CD4-positive, alpha-beta T cell (primary cell): ENCODE measurements at regions of chr13 and their contacts with region 1.

Region 1: DNA sequence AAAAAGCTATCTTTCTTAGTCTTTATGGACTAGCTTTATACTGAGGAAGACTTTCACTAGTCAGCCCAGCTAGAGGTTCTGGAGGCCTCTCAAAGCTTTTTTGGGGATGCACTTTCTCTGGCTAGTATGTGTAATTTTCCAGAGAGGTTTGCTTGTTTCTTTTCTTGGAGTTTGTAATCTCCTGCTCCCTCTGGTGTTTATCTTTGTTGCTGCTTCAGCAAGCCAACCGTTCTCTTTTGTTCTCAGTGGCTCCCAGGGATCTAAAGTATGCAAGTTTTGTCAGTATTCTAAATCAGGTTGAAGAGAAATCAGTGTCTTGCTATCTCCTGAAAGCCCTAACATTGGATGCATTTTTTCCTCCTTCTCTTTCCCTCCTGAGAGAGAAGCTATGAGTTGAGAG is 121.1 kb upstream of the MYO16 start:
- DNase-seq: peak in 3 of 14 experiments; percentile 49 to 63 (median 52)
- ATAC-seq: no peak
- H3K4me3 ChIP-seq: no peak overlapping the region
- H3K4me3 Mint-ChIP-seq: no peak overlapping the region
- H3K27ac ChIP-seq: no peak overlapping the region
- H3K27ac Mint-ChIP-seq: no peak overlapping the region
- H3K4me1 ChIP-seq: no peaks in the 10 kb centered on the region
- H3K4me1 Mint-ChIP-seq: no peaks in the 10 kb centered on the region
- H3K27me3 ChIP-seq: no peaks in the 10 kb centered on the region
- H3K27me3 Mint-ChIP-seq: no peaks in the 10 kb centered on the region
- CTCF ChIP-seq: peak; percentile 48

Region 2: DNA sequence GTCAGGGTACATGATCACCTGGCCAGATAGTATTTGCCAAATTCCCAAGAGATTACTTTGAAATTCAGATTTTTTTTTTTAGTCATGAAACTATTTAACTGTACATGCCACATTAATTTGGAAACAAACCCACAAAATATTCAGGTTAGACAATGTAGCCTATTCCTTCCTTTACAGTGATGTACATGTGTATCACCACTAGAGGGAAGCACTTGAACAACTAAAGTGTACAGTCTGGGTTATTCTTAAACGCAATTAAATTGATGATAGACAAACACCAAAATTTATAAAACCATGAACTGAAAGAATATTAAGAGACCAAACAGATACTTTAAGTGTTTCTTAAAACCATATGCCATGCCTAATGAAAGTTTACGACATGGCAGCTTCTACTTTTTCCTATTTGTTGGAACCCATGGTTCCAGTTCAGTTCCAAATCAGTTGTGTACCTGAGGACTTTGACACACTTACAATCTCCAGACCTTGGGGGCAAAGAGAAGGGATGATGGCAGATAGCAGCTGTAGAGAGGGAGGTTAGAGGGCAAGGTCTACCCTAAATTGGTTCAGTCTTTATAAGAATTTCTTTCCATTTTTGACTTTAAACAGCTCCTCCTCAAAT is 185.9 kb before region 1 on chr13:
- CTCF ChIA-PET with region 1: interaction called, 3 read pairs
- POLR2A ChIA-PET with region 1: no interaction called
- intact Hi-C with region 1: loop called (anchors 5 kb)
- DNase-seq: peak in 3 of 14 experiments; percentile 65 to 68 (median 67)
- ATAC-seq: peak; percentile 77
- H3K4me3 ChIP-seq: no peak overlapping the region
- H3K4me3 Mint-ChIP-seq: no peak overlapping the region
- H3K27ac ChIP-seq: no peak overlapping the region
- H3K27ac Mint-ChIP-seq: no peak overlapping the region
- H3K4me1 ChIP-seq: peaks cover 9% of the 10 kb centered on the region
- H3K4me1 Mint-ChIP-seq: peaks cover 17% of the 10 kb centered on the region
- H3K27me3 ChIP-seq: no peaks in the 10 kb centered on the region
- H3K27me3 Mint-ChIP-seq: peaks cover 11% of the 10 kb centered on the region
- CTCF ChIP-seq: peak; percentile 85

Region 3: GRCh38 chr13:108342369-108343289 is 165.6 kb before region 1 on chr13:
- CTCF ChIA-PET with region 1: interaction called, 6 read pairs
- POLR2A ChIA-PET with region 1: no interaction called
- intact Hi-C with region 1: loop called (anchors 5 kb)
- DNase-seq: peak in 6 of 14 experiments; percentile 6 to 69 (median 36)
- ATAC-seq: peak; percentile 62
- H3K4me3 ChIP-seq: peak overlapping the region; percentile 2
- H3K4me3 Mint-ChIP-seq: peak overlapping the region; percentile 4
- H3K27ac ChIP-seq: peak overlapping the region; percentile 52 to 58
- H3K27ac Mint-ChIP-seq: peak overlapping the region; percentile 73
- H3K4me1 ChIP-seq: peaks cover 8% of the 10 kb centered on the region
- H3K4me1 Mint-ChIP-seq: peaks cover 26% of the 10 kb centered on the region
- H3K27me3 ChIP-seq: no peaks in the 10 kb centered on the region
- H3K27me3 Mint-ChIP-seq: no peaks in the 10 kb centered on the region
- CTCF ChIP-seq: peak; percentile 59

Region 4: DNA sequence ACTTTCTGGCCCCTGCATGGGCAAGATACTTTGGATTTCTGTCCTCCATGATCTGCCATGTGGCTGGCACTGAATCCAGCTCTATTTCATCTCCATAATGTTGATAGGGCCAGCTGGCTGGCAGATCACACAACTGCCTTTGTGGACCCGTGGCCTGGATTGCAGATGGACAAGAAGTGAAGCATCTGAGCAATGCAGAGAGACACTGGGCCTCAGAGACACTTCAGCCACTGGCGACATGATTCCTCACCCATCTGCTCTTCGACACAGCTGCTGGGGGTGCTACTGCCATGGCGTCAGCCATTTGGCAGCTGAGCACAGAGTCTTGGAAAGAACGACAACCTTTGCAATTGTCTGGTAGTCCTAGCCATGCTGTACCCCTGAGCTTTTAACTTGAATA is 41.7 kb after region 1 on chr13:
- CTCF ChIA-PET with region 1: no interaction called
- POLR2A ChIA-PET with region 1: no interaction called
- intact Hi-C with region 1: no loop called
- DNase-seq: no peak
- ATAC-seq: no peak
- H3K4me3 ChIP-seq: no peak overlapping the region
- H3K4me3 Mint-ChIP-seq: no peak overlapping the region
- H3K27ac ChIP-seq: no peak overlapping the region
- H3K27ac Mint-ChIP-seq: no peak overlapping the region
- H3K4me1 ChIP-seq: no peaks in the 10 kb centered on the region
- H3K4me1 Mint-ChIP-seq: no peaks in the 10 kb centered on the region
- H3K27me3 ChIP-seq: no peaks in the 10 kb centered on the region
- H3K27me3 Mint-ChIP-seq: peaks cover 9% of the 10 kb centered on the region
- CTCF ChIP-seq: no peak

Region 5: DNA sequence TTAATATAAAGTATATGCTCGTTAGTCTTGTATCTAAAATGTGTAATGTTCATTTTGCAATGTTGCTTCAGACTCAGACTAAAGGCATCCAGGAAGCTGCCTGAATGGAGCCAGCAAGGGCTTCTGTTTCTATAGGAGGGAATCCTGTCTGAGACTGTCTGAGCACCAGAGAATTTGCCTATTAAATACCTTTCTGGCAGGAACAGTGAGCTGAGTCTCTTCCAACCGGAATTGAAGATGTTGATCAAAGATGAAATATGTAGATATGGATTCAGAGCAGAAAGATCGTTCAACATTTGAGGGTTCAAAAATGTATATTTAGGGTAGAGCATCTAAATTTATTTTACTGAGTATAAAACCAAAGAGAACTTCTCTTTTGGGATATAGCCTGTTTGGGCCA is 142.0 kb after region 1 on chr13:
- CTCF ChIA-PET with region 1: no interaction called
- POLR2A ChIA-PET with region 1: no interaction called
- intact Hi-C with region 1: no loop called
- DNase-seq: no peak
- ATAC-seq: no peak
- H3K4me3 ChIP-seq: no peak overlapping the region
- H3K4me3 Mint-ChIP-seq: no peak overlapping the region
- H3K27ac ChIP-seq: no peak overlapping the region
- H3K27ac Mint-ChIP-seq: no peak overlapping the region
- H3K4me1 ChIP-seq: no peaks in the 10 kb centered on the region
- H3K4me1 Mint-ChIP-seq: no peaks in the 10 kb centered on the region
- H3K27me3 ChIP-seq: no peaks in the 10 kb centered on the region
- H3K27me3 Mint-ChIP-seq: no peaks in the 10 kb centered on the region
- CTCF ChIP-seq: no peak